ENCODE measurements at regions of chr1 and their contacts with region 1.

Region 1: GRCh38 chr1:11037740-11038182 is 9.3 kb downstream of the MASP2 start:
- DNase-seq: peak; percentile 87
- H3K4me3 ChIP-seq: no peak overlapping the region
- H3K27ac ChIP-seq: no peak overlapping the region
- H3K4me1 ChIP-seq: peaks cover 4% of the 10 kb centered on the region
- CTCF ChIP-seq: peak; percentile 100

Region 2: GRCh38 chr1:11000526-11000925 is 37.2 kb before region 1 on chr1:
- CTCF ChIA-PET with region 1: no interaction called
- POLR2A ChIA-PET with region 1: no interaction called
- intact Hi-C with region 1: no loop called
- DNase-seq: no peak
- H3K4me3 ChIP-seq: no peak overlapping the region
- H3K27ac ChIP-seq: no peak overlapping the region
- H3K4me1 ChIP-seq: no peaks in the 10 kb centered on the region
- CTCF ChIP-seq: no peak

Region 3: DNA sequence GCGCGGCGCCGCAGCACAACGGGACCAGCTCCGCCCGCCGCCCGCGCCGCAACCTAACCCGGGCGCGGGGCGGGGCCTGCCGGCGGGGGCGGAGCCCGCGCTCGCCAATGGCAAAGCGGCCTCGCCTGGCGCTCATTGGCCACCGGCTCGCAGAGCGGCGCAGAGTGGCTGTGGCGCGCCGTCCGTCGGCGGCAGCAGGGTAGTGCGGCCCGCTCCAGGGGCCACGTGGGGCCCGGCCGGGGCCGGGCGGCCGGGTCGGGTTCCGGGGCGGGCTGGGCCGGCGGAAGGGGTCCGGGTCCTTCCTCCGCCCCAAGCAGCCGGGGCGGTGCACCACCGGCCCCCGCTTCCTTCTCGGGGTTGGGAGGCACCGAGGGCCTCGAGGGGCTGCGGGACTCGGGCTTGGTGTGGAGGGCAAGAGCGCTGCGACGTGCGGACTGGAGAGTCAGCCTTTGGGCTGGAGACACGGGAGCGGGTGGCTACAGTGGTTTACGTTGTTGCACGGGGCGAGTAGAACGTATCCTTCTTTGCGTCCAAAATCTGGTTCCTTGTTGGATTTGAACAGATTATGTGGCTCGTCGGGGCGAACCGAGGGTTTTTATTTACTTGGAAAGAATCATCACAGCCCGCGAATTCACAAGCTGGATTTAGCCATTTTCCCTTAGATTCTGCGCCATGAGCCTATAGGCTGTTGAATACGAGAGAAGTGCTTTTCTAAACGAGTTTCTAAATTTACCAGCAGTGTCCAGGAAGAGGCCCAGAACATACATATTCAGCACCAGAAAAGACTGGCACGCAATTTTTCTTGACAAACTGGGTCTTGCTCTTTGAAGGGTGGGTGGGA is 22.4 kb after region 1 on chr1 and contains the start of gene SRM:
- CTCF ChIA-PET with region 1: interaction called, 12 read pairs
- POLR2A ChIA-PET with region 1: interaction called, 3 read pairs
- intact Hi-C with region 1: no loop called
- DNase-seq: peak; percentile 95
- H3K4me3 ChIP-seq: peak within 1 kb of the TSS; percentile 90
- H3K27ac ChIP-seq: peak within 1 kb of the TSS; percentile 58
- H3K4me1 ChIP-seq: peaks cover 28% of the 10 kb centered on the region
- CTCF ChIP-seq: no peak
- total RNA-seq, gene SRM: 52.4 and 65.2 TPM in 2 replicates

Region 4: DNA sequence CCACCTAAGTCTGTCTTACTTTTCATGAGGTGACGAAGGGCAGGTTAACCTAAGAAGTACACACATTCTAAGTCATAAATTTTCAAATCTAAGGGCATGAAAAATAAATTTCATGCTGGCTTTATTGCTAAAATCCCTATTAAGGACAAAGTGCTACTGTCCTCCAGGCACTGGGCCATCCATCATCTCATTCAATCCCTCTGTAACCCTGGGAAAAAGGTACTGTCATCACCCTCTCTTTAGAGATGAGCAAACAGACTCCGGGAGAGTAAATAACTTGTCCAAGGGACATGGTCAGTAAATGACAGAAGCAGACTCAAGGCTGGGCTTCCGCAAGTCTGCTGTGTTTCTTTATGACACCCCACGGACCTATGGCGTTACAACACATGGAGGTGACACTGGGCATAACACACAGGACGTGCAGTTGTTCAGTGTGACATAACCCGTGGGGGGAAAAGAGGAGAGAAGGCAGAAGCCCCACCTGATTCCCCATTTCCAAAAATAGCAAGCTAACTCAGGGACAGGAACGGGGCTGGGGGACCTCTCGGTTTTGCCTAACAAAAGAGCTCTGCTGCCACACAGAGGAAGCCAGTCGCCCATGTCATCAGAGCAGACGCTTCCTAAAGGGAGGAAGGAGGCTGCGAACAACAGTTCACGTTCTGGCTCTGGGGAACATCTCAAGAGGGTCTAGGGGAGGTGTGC is 34.6 kb after region 1 on chr1:
- CTCF ChIA-PET with region 1: interaction called, 4 read pairs
- POLR2A ChIA-PET with region 1: interaction called, 5 read pairs
- intact Hi-C with region 1: loop called (anchors 1 kb)
- DNase-seq: peak; percentile 71
- H3K4me3 ChIP-seq: no peak overlapping the region
- H3K27ac ChIP-seq: peak overlapping the region; percentile 54
- H3K4me1 ChIP-seq: peaks cover 19% of the 10 kb centered on the region
- CTCF ChIP-seq: peak; percentile 65

Region 5: GRCh38 chr1:11114966-11115365 is 77.2 kb after region 1 on chr1:
- CTCF ChIA-PET with region 1: no interaction called
- POLR2A ChIA-PET with region 1: no interaction called
- intact Hi-C with region 1: loop called (anchors 5 kb)
- DNase-seq: no peak
- H3K4me3 ChIP-seq: no peak overlapping the region
- H3K27ac ChIP-seq: no peak overlapping the region
- H3K4me1 ChIP-seq: no peaks in the 10 kb centered on the region
- CTCF ChIP-seq: no peak

Region 6: DNA sequence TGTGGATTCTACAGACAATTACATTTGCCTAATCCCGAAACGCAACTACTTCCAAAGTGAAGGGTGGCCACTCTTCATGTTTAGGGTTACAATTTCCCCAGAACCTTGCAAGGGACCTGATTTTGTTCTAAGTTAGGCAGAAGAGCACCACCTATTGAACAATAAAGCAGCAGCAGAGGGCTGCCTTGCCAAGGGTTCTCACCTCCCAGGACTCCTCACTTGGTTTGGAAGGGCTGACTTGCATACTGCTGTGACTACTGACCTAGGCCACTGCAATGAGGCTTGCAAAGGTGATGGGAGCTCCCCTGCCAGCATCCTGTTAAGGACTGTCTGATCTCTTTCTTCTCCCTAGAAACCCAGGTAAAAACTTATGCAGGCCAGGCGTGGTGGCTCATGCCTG is 210.4 kb after region 1 on chr1:
- CTCF ChIA-PET with region 1: no interaction called
- POLR2A ChIA-PET with region 1: no interaction called
- intact Hi-C with region 1: loop called (anchors 10 kb)
- DNase-seq: peak; percentile 14
- H3K4me3 ChIP-seq: no peak overlapping the region
- H3K27ac ChIP-seq: no peak overlapping the region
- H3K4me1 ChIP-seq: no peaks in the 10 kb centered on the region
- CTCF ChIP-seq: peak; percentile 50

Region 7: DNA sequence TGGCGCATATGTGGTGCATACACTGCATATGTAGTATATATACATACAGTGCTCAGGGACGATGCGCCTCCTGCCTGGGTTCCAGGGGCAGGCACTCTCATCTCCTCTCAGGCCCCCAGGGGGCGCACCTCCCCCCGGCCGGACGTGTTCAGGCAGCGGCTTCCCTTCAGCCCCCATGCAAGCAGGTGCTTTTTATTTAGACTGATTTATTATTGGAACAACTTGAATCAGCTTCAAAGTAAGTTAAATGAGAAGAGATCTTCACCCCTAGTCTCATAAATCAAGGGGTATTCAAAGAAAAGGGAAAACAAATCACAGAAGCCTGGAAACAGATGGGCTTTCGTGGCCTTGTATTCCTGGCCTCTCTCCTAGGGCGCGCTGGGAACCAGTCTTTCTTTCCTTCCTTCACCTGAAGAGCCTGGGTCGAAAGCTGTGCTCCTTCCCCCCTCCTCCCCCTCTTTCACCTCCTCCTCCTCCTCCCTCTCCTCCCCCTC is 299.9 kb after region 1 on chr1:
- CTCF ChIA-PET with region 1: no interaction called
- POLR2A ChIA-PET with region 1: no interaction called
- intact Hi-C with region 1: loop called (anchors 1 kb)
- DNase-seq: peak; percentile 71
- H3K4me3 ChIP-seq: no peak overlapping the region
- H3K27ac ChIP-seq: no peak overlapping the region
- H3K4me1 ChIP-seq: no peaks in the 10 kb centered on the region
- CTCF ChIP-seq: peak; percentile 95